Endothelial cell of umbilical vein (primary cell): ENCODE measurements at regions of chr1 and their contacts with region 1.

Region 1: DNA sequence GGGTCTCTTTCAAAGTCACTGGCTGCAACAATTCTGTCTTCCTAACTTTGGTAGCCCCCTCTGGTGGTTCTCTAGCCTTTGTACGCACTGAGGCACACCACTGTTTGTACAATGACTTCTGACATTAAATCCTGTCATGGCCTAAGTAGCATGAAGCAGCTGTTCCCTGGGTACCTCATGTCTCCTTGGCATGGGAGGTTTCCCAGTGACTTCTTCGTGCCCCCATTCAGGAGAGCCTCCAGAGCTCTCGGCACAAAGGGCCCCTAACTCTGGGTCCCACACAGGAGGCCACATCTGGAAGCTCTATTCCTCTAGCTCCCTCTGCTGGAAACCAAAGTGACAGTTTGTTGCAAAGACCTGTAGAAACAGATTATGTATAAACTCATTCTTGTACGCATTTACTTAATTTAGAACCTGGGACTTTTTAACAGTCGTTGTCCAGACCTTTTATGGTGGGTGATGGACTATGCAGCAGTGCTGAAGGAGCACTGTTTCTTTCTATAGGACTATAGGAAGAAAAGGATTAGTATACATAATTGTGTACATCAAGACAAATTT is 13.4 kb downstream of the SWT1 start:
- DNase-seq: peak; percentile 80
- H3K4me3 ChIP-seq: no peak overlapping the region
- H3K27ac ChIP-seq: no peak overlapping the region
- H3K4me1 ChIP-seq: peaks cover 6% of the 10 kb centered on the region
- H3K27me3 ChIP-seq: no peaks in the 10 kb centered on the region
- CTCF ChIP-seq: peak; percentile 61 to 65
- POLR2A ChIP-seq: no peak

Region 2: GRCh38 chr1:184754476-184755225 is 415.7 kb before region 1 on chr1 and contains the start of gene EDEM3:
- CTCF ChIA-PET with region 1: interaction called, 5 read pairs
- POLR2A ChIA-PET with region 1: no interaction called
- dilution Hi-C with region 1: no loop called
- intact Hi-C with region 1: loop called (anchors 5 kb)
- DNase-seq: peak; percentile 99
- H3K4me3 ChIP-seq: peak within 1 kb of the TSS; percentile 59 to 83 (median 81)
- H3K27ac ChIP-seq: peak within 1 kb of the TSS; percentile 76
- H3K4me1 ChIP-seq: peaks cover 16% of the 10 kb centered on the region
- H3K27me3 ChIP-seq: peaks cover 0 to 3% of the 10 kb centered on the region in 2 experiments
- CTCF ChIP-seq: no peak
- POLR2A ChIP-seq: peak; percentile 93
- total RNA-seq, gene EDEM3: 26.3 and 33.5 TPM in 2 replicates

Region 3: DNA sequence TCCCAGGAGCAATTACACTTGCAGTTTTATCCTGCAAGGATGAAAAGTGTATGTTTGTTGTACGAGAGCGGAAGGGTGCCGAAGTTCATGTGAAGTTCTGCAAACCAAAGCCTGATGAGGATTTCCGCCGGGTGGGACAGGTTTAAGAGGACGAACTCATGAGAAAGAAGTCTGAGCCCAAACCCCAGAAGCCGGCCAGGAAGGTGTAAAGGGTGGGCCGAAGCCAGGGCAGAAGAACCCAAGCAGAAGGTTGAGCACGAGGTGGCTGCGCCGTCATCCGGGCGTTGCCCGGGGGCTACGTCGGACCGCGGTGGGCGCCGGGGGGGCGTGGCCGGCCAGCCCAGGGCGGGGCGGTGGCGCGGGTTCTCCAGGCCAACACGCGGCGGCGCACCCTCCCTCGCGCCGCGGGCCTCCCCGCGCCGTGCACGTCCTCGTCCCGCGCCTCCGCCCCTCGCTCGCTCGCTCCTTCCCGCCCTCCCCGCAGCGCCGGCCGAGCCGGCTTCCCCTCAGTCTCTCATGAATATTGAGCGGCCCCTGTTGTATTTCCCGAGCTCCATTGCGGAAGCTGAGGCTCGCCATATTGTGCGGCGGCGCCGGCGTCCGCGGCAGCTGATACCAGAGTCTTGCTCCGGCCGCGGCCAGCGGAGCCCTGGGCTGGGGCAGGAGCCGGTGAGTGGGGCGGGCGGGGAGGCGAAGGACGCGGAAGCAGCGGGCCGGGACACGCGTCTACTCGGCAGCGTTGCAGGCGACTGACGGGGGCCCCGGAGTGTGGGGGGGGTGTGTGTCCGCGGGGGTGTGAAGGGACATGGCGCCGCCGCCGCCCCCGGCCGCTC is 125.2 kb before region 1 on chr1 and contains the start of gene RNF2:
- CTCF ChIA-PET with region 1: interaction called, 27 read pairs
- POLR2A ChIA-PET with region 1: no interaction called
- dilution Hi-C with region 1: no loop called
- intact Hi-C with region 1: loop called (anchors 1 kb)
- DNase-seq: peak; percentile 86
- H3K4me3 ChIP-seq: peak within 1 kb of the TSS; percentile 71 to 96 (median 74)
- H3K27ac ChIP-seq: peak within 1 kb of the TSS; percentile 9
- H3K4me1 ChIP-seq: peaks cover 12% of the 10 kb centered on the region
- H3K27me3 ChIP-seq: no peaks in the 10 kb centered on the region
- CTCF ChIP-seq: no peak
- POLR2A ChIP-seq: peak; percentile 59
- total RNA-seq, gene RNF2: 26.0 and 30.6 TPM in 2 replicates

Region 4: GRCh38 chr1:185156854-185157598 is 13.3 kb before region 1 on chr1 and contains the starts of genes SWT1 and TRMT1L:
- CTCF ChIA-PET with region 1: interaction called, 36 read pairs
- POLR2A ChIA-PET with region 1: no interaction called
- dilution Hi-C with region 1: no loop called
- intact Hi-C with region 1: no loop called
- DNase-seq: peak; percentile 100
- H3K4me3 ChIP-seq: peak within 1 kb of the TSS; percentile 60 to 95 (median 92)
- H3K27ac ChIP-seq: peak within 1 kb of the TSS; percentile 85
- H3K4me1 ChIP-seq: peaks cover 19% of the 10 kb centered on the region
- H3K27me3 ChIP-seq: no peaks in the 10 kb centered on the region
- CTCF ChIP-seq: no peak
- POLR2A ChIP-seq: peak; percentile 88
- total RNA-seq, gene SWT1: 3.6 and 4.3 TPM in 2 replicates
- total RNA-seq, gene TRMT1L: 12.8 and 16.1 TPM in 2 replicates

Region 5: GRCh38 chr1:185670187-185670627 is 499.8 kb after region 1 on chr1:
- CTCF ChIA-PET with region 1: interaction called, 38 read pairs
- POLR2A ChIA-PET with region 1: no interaction called
- dilution Hi-C with region 1: no loop called
- intact Hi-C with region 1: loop called (anchors 2 kb)
- DNase-seq: peak; percentile 74
- H3K4me3 ChIP-seq: no peak overlapping the region
- H3K27ac ChIP-seq: no peak overlapping the region
- H3K4me1 ChIP-seq: peaks cover 17% of the 10 kb centered on the region
- H3K27me3 ChIP-seq: no peaks in the 10 kb centered on the region
- CTCF ChIP-seq: peak; percentile 44 to 57
- POLR2A ChIP-seq: no peak

Region 6: GRCh38 chr1:186212544-186213226 is 1042.3 kb after region 1 on chr1:
- CTCF ChIA-PET with region 1: no interaction called
- POLR2A ChIA-PET with region 1: no interaction called
- dilution Hi-C with region 1: no loop called
- intact Hi-C with region 1: loop called (anchors 10 kb)
- DNase-seq: peak; percentile 88
- H3K4me3 ChIP-seq: no peak overlapping the region
- H3K27ac ChIP-seq: no peak overlapping the region
- H3K4me1 ChIP-seq: peaks cover 4% of the 10 kb centered on the region
- H3K27me3 ChIP-seq: no peaks in the 10 kb centered on the region
- CTCF ChIP-seq: peak; percentile 73 to 77
- POLR2A ChIP-seq: no peak